Panc1 (cell line): ENCODE measurements at regions of chr10 and their contacts with region 1.

Region 1: GRCh38 chr10:32909456-32909855 is 48.6 kb downstream of the ITGB1 start:
- DNase-seq: no peak
- ATAC-seq: no peak
- H3K4me3 ChIP-seq: no peak overlapping the region
- H3K27ac ChIP-seq: peak overlapping the region; percentile 45
- H3K4me1 ChIP-seq: no peaks in the 10 kb centered on the region; the same call in 1 of the 2 replicates
- H3K27me3 ChIP-seq: no peaks in the 10 kb centered on the region
- CTCF ChIP-seq: no peak

Region 2: DNA sequence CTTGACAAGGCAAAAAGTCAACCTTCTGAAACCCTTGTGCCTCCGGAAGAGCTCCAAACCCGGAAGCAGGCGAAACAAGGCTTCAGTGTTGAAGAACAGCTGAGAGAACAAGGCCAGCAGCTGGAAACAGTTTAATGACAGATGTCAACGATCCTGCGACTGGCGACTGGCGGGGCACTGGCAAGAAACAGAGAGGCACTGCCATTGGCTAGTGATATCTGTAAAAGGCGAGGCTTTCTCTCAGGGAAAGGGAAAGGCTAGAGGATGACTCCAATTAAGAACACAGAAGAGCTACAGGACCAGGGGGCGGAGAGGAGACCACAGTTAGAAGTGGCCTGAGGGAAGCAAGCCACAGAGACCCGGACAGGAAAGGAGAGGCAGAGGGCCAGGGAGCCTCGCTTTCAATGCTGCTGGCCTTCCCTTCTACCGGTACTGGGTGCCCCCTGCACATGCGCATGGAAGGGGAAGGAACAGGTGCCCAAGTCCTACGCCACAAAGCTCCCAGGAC is 29.2 kb after region 1 on chr10:
- CTCF ChIA-PET with region 1: no interaction called
- POLR2A ChIA-PET with region 1: interaction called, 12 read pairs
- in situ Hi-C with region 1: no loop called
- intact Hi-C with region 1: no loop called
- DNase-seq: no peak
- ATAC-seq: peak; percentile 55
- H3K4me3 ChIP-seq: no peak overlapping the region
- H3K27ac ChIP-seq: peak overlapping the region; percentile 84
- H3K4me1 ChIP-seq: peaks cover 92% of the 10 kb centered on the region
- H3K27me3 ChIP-seq: no peaks in the 10 kb centered on the region
- CTCF ChIP-seq: no peak

Region 3: GRCh38 chr10:32961895-32962369 is 52.5 kb after region 1 on chr10:
- CTCF ChIA-PET with region 1: no interaction called
- POLR2A ChIA-PET with region 1: no interaction called
- in situ Hi-C with region 1: no loop called
- intact Hi-C with region 1: no loop called
- DNase-seq: no peak
- ATAC-seq: peak; percentile 23
- H3K4me3 ChIP-seq: 0 out of 4 replicates have a peak overlapping the region, but pooled peaks of 1 of the 2 experiments have one; percentile 4
- H3K27ac ChIP-seq: peak overlapping the region; percentile 100
- H3K4me1 ChIP-seq: peaks cover 34% of the 10 kb centered on the region
- H3K27me3 ChIP-seq: no peaks in the 10 kb centered on the region
- CTCF ChIP-seq: peak; percentile 23